ENCODE measurements at regions of chr19 and their contacts with region 1.

Region 1: DNA sequence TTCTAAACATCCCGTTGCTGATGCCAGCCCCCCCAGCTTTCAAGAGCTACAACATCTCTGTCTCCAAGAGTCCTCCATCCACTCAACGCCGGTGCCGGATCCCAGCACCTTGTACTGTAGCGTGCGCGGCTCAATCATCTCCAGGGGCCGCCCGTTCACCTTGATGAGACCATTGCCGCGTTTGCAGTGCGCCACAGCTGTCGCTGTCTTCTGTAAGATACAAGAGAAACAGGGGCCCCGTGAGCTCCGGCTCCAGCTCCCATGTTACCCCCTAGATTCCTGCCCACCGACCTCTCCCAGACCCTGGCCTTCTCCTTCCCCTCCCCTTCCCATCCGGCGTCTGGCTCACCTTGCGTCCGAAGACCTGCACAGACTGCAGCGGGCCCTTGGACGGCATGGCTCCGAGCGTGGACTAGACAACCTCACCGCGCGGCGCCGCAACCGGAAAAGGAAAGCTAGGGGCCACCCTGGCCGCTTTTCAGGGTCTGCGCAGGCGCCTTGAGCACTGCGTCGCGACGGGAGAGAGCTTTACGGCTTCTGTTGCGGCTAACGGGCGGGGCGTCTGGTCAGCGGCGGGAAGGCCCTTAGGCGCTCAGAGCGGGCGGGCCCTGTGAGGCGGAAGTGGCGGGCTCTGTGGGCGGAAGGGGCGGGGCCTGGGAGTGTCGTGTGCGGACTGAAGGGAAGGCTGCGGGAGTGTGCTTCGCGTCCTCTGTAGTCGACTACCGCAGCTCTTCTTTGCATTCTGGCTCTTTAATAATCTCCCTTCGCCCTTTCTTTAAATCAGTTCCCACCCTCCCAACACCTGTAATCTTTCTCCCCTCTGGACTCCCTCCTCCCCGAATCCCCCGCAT is at the start of gene RPS16:
- DNase-seq: peak; percentile 98 to 99 (median 98)
- H3K4me3 ChIP-seq: peak within 1 kb of the TSS; percentile 54 to 96 (median 95)
- H3K4me3 Mint-ChIP-seq: peak within 1 kb of the TSS; percentile 99
- H3K27ac ChIP-seq: peak within 1 kb of the TSS; percentile 82 to 89
- H3K27ac Mint-ChIP-seq: peak within 1 kb of the TSS; percentile 94 to 99 (median 97)
- H3K4me1 ChIP-seq: peaks cover 32 to 38% of the 10 kb centered on the region in 2 donors
- H3K4me1 Mint-ChIP-seq: peaks cover 40% of the 10 kb centered on the region
- H3K27me3 ChIP-seq: peaks cover 0 to 2% of the 10 kb centered on the region in 2 donors
- H3K27me3 Mint-ChIP-seq: peaks cover 6 to 12% (median 9%) of the 10 kb centered on the region in 3 donors
- CTCF ChIP-seq: no peak
- polyA plus RNA-seq, gene RPS16: 689 to 2,619 (median 1,038) TPM

Region 2: DNA sequence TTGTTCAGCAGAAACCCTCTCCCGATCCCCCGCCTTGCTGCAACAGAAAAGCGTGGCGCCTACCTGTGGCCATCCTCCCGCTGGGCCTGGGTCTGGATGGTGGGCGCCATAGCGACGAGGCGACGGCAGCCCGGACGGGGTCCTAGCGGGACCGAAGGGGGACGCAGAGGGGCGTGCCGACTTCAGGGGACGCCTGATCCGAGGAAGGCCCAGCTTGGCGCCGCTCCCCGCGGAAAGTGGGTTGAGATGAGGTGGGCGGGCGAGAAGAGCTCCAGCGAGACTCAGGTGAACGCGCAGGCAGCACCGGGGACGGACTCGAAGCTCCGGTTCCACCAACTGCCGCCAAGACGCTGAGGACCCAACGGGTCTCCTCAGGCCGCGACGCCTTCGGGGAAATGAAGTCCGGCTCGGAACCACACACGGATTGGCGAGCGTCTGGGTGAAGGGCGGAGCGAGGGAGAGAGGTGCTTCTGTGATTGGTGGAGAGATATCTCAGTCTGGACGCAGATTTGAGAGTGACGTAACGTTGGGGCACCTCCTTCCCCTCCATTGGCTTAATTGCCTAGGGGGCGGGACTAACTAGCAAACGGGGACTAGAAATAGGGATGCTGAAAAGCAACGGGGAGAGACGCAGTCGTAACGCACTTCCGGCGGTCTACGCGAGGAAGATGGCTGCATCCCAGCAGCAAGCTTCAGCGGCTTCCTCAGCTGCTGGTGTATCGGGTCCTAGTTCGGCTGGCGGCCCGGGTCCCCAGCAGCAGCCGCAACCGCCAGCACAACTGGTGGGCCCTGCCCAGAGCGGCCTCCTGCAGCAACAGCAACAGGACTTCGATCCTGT is 44.8 kb before region 1 on chr19 and contains the starts of genes MED29 and PAF1:
- intact Hi-C with region 1: loop called (anchors 1 to 2 kb)
- DNase-seq: peak; percentile 99 to 100 (median 99)
- H3K4me3 ChIP-seq: peak within 1 kb of the TSS; percentile 77 to 97 (median 79)
- H3K4me3 Mint-ChIP-seq: peak within 1 kb of the TSS; percentile 89 to 96
- H3K27ac ChIP-seq: peak within 1 kb of the TSS; percentile 85 to 91
- H3K27ac Mint-ChIP-seq: peak within 1 kb of the TSS; percentile 97 to 99 (median 98)
- H3K4me1 ChIP-seq: peaks cover 21 to 22% of the 10 kb centered on the region in 2 donors
- H3K4me1 Mint-ChIP-seq: peaks cover 19% of the 10 kb centered on the region
- H3K27me3 ChIP-seq: no peaks in the 10 kb centered on the region
- H3K27me3 Mint-ChIP-seq: peaks cover 0 to 3% (median 0%) of the 10 kb centered on the region in 3 donors
- CTCF ChIP-seq: no peak
- polyA plus RNA-seq, gene MED29: 35.8 to 38.2 (median 37.0) TPM
- polyA plus RNA-seq, gene PAF1: 22.7 to 37.8 (median 25.2) TPM

Region 3: GRCh38 chr19:39412100-39412866 is 23.4 kb before region 1 on chr19 and contains the start of gene PLEKHG2:
- intact Hi-C with region 1: loop called in 1 of 2 experiments (anchors 2 kb)
- DNase-seq: peak; percentile 99
- H3K4me3 ChIP-seq: peak within 1 kb of the TSS; percentile 89 to 96 (median 91)
- H3K4me3 Mint-ChIP-seq: peak within 1 kb of the TSS; percentile 91 to 99
- H3K27ac ChIP-seq: peak within 1 kb of the TSS; percentile 98 to 99
- H3K27ac Mint-ChIP-seq: peak within 1 kb of the TSS; percentile 96 to 100 (median 98)
- H3K4me1 ChIP-seq: peaks cover 27 to 31% of the 10 kb centered on the region in 2 donors
- H3K4me1 Mint-ChIP-seq: peaks cover 26% of the 10 kb centered on the region
- H3K27me3 ChIP-seq: no peaks in the 10 kb centered on the region
- H3K27me3 Mint-ChIP-seq: peaks cover 2 to 36% (median 10%) of the 10 kb centered on the region in 3 donors
- CTCF ChIP-seq: peak; percentile 79
- polyA plus RNA-seq, gene PLEKHG2: 0.73 to 202 (median 1.2) TPM

Measured in CD14-positive monocyte (primary cell).